GM10248 (cell line): ENCODE measurements at regions of chr7 and their contacts with region 1.

Region 1: GRCh38 chr7:43175570-43176200 is 63.2 kb downstream of the HECW1 start:
- DNase-seq: no peak
- CTCF ChIP-seq: no peak

Region 2: GRCh38 chr7:43164757-43165156 is 10.9 kb before region 1 on chr7:
- CTCF ChIA-PET with region 1: interaction called, 11 read pairs
- POLR2A ChIA-PET with region 1: no interaction called
- DNase-seq: peak; percentile 72
- CTCF ChIP-seq: no peak